ENCODE measurements at regions of chr3 and their contacts with region 1.

Region 1: DNA sequence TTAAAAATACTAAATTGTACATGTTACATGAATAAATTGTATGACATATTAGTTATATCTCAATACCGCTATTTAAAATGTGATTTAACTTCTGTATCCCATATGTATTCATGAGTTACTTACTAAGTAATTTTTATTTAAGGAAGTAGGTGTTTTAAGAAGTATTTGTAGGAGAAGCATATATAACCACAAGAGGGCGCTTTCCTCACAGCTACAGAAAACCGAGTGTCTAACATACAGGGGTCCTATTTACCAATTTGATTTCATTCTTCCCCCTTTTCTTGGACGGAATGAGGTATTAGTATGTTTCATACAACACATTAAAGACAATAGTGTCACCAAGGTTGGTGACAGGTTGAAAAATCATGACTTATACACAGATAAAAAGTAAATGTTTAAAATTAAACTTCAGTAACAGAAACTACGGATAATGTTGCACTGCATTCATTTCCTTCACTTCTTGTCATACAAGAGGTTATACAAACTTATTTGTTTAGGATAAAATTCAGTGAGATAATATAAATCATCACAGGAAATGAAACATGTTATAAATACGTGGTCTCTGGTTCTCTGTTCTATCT is 253.6 kb downstream of the MAGI1 start:
- DNase-seq: peak in 1 of 3 donors; percentile 40
- ATAC-seq: peak; percentile 29
- H3K4me3 ChIP-seq: no peak overlapping the region
- H3K4me1 ChIP-seq: no peaks in the 10 kb centered on the region
- CTCF ChIP-seq: peak; percentile 34

Region 2: GRCh38 chr3:65732051-65732935 is 52.9 kb before region 1 on chr3:
- intact Hi-C with region 1: no loop called
- DNase-seq: peak in 1 of 3 donors; percentile 19
- ATAC-seq: peak; percentile 83
- H3K4me3 ChIP-seq: no peak overlapping the region
- H3K4me1 ChIP-seq: peaks cover 14% of the 10 kb centered on the region
- CTCF ChIP-seq: peak; percentile 61

Region 3: GRCh38 chr3:66029443-66029842 is 244.3 kb after region 1 on chr3:
- intact Hi-C with region 1: no loop called
- DNase-seq: no peak
- ATAC-seq: peak; percentile 84
- H3K4me3 ChIP-seq: no peak overlapping the region
- H3K4me1 ChIP-seq: no peaks in the 10 kb centered on the region
- CTCF ChIP-seq: no peak

Region 4: GRCh38 chr3:66138336-66139313 is 353.5 kb after region 1 on chr3:
- intact Hi-C with region 1: loop called (anchors 5 to 10 kb)
- DNase-seq: peak in 2 of 3 donors; percentile 42 to 71
- ATAC-seq: peak; percentile 85
- H3K4me3 ChIP-seq: no peak overlapping the region
- H3K4me1 ChIP-seq: no peaks in the 10 kb centered on the region
- CTCF ChIP-seq: peak; percentile 59